ENCODE measurements at regions of chr2 and their contacts with region 1.

Region 1: GRCh38 chr2:241508240-241509154 is at the start of gene STK25:
- DNase-seq: peak; percentile 97 to 98
- ATAC-seq: peak; percentile 51 to 59
- H3K4me3 ChIP-seq: peak within 1 kb of the TSS; percentile 72 to 85 (median 78)
- H3K27ac ChIP-seq: peak within 1 kb of the TSS; percentile 93 to 98 (median 96)
- H3K4me1 ChIP-seq: peaks cover 45 to 53% of the 10 kb centered on the region in 2 donors
- H3K27me3 ChIP-seq: no peaks in the 10 kb centered on the region
- CTCF ChIP-seq: no peak
- POLR2A ChIP-seq: peak; percentile 82 to 84
- total RNA-seq, gene STK25: 407 to 555 (median 524) TPM

Region 2: DNA sequence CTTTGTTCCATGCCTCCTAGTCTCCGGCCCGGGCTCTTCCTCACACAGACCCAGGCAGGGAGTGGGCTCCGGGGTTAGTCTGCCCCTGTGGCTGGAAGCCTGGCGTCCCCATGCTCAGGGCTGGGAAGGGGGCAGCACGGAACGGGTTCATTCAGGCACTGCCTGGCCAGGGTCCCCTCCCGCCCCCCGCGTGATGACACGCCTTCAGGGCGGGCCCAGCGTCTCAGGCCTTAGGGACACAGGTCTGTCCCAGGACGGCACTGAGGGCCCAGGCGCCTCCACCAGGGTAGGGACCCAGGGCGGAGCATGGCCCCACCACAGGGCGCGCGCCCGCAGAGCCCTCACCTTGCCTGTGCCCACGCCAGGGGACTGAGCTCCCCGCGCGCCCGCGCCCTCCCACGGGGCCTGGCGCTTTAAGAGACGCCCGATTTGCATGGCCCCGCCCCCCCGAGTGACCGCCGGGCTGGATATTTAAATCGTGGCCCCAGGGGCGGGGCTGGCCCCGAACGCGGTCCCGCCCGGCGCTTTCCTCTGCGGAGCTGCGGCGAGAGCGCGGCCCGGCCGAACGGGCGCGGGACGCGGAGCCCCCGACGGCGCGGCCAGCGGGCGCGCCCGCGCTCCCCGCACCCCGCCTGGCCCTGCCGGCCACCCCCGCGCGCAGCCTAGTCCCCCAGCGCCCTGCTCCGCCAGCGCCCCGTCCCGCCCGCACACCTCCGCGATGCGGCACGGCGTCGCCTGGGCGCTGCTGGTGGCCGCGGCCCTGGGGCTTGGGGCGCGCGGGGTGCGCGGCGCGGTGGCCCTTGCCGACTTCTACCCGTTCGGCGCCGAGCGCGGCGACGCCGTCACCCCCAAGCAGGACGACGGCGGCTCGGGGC is 510.1 kb before region 1 on chr2 and contains the start of gene SNED1:
- in situ Hi-C with region 1: no loop called
- intact Hi-C with region 1: loop called (anchors 5 kb)
- DNase-seq: peak; percentile 87 to 89
- ATAC-seq: peak; percentile 61 to 79
- H3K4me3 ChIP-seq: peak within 1 kb of the TSS; percentile 63 to 98 (median 73)
- H3K27ac ChIP-seq: peak within 1 kb of the TSS; percentile 95 to 99 (median 96)
- H3K4me1 ChIP-seq: peaks cover 41 to 51% of the 10 kb centered on the region in 2 donors
- H3K27me3 ChIP-seq: no peaks in the 10 kb centered on the region
- CTCF ChIP-seq: no peak
- POLR2A ChIP-seq: peak; percentile 92 to 98
- total RNA-seq, gene SNED1: 16.4 to 56.2 (median 43.5) TPM

Region 3: GRCh38 chr2:241217320-241218031 is 291.0 kb before region 1 on chr2:
- in situ Hi-C with region 1: no loop called
- intact Hi-C with region 1: loop called (anchors 5 kb)
- DNase-seq: peak; percentile 29 to 74
- ATAC-seq: peak; percentile 69 to 81
- H3K4me3 ChIP-seq: peak overlapping the region; percentile 57 to 69 (median 63)
- H3K27ac ChIP-seq: peak overlapping the region; percentile 73 to 94 (median 79)
- H3K4me1 ChIP-seq: peaks cover 4 to 16% of the 10 kb centered on the region in 2 donors
- H3K27me3 ChIP-seq: no peaks in the 10 kb centered on the region
- CTCF ChIP-seq: peak in 1 of 5 experiments; percentile 13
- POLR2A ChIP-seq: no peak

Region 4: GRCh38 chr2:241315093-241315878 is 193.2 kb before region 1 on chr2 and contains the start of gene HDLBP:
- in situ Hi-C with region 1: no loop called
- intact Hi-C with region 1: loop called (anchors 1 kb)
- DNase-seq: peak; percentile 98 to 99
- ATAC-seq: peak; percentile 80 to 87
- H3K4me3 ChIP-seq: peak within 1 kb of the TSS; percentile 67 to 92 (median 83)
- H3K27ac ChIP-seq: peak within 1 kb of the TSS; percentile 97 to 99 (median 98)
- H3K4me1 ChIP-seq: peaks cover 66 to 73% of the 10 kb centered on the region in 2 donors
- H3K27me3 ChIP-seq: no peaks in the 10 kb centered on the region
- CTCF ChIP-seq: peak in 2 of 5 experiments; percentile 15 to 16
- POLR2A ChIP-seq: peak; percentile 90 to 93
- total RNA-seq, gene HDLBP: 383 to 486 (median 444) TPM

Region 5: DNA sequence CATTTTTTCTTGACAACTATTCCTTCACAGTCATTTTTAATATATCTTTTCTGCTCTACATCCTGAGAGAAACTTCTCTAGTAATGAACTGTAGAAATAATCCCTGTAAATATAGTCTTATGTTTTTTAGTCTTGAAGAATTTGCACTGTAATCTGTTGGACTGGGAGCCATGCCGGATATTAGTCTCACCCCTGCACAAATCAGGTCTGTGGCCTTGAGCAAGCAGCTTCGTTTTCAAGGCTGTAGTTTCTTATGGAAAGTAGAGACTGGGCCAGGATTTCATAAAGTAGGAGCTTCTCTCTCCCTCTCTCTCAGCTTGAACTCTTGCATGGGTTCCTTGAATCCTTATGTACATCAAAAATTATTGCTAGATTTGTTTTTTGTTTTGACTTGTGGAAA is 143.7 kb before region 1 on chr2:
- in situ Hi-C with region 1: no loop called
- intact Hi-C with region 1: loop called (anchors 2 kb)
- DNase-seq: no peak
- ATAC-seq: no peak
- H3K4me3 ChIP-seq: no peak overlapping the region
- H3K27ac ChIP-seq: peak overlapping the region in 2 of 4 donors; percentile 73 to 84
- H3K4me1 ChIP-seq: peaks cover 42 to 49% of the 10 kb centered on the region in 2 donors
- H3K27me3 ChIP-seq: no peaks in the 10 kb centered on the region
- CTCF ChIP-seq: no peak
- POLR2A ChIP-seq: no peak

Region 6: DNA sequence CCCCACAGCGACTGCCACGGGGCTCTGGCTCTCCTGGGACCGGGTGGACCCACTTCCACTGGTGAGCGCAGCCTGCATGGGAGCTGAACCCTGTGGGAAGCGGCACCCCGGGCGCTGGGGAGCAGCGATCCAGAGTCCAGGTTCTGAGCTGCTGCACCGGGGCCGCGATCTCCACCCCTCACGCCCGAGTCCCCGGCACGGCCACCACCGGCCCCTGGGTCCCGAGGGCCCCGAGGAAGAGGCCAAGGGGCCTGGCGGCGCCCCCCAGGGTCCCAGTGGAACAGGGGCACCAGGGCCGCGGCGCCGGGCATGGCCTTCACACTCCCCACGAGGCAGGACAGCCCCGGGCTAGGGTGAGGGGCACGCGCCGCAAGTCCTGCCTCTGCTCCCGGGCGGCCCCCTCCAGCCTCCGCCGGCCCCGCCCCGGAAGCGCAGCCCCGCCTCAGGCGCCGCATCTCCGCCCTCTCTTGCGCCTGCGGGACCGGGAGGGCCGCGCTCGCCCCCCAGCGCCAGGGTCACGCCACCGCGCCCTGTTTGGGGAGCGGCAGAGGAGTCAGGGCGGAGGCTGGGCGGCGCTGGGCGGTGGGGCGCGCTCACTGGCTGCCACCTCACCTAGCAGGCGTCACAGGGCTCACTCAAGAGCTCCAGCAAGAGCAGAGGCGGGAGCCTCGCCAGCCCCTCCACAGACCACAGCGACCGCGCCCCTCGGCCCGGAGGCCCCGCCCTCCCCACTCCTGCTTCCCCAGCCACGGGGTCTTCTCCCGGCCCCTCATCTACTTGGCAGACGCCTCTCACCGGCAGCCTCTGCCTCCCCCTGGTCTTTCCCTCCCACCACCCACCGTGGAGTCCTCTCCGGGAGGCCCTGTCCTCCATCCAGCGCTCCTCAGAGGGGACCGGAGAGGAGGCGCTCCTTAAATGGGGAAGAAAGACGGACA is 101.6 kb after region 1 on chr2:
- in situ Hi-C with region 1: no loop called
- intact Hi-C with region 1: loop called (anchors 5 kb)
- DNase-seq: peak; percentile 55 to 78
- ATAC-seq: peak; percentile 86
- H3K4me3 ChIP-seq: peak overlapping the region; percentile 67 to 80 (median 70)
- H3K27ac ChIP-seq: peak overlapping the region; percentile 72 to 85 (median 78)
- H3K4me1 ChIP-seq: peaks cover 7 to 14% of the 10 kb centered on the region in 2 donors
- H3K27me3 ChIP-seq: no peaks in the 10 kb centered on the region
- CTCF ChIP-seq: peak; percentile 48 to 87 (median 56)
- POLR2A ChIP-seq: peak; percentile 23 to 47

Region 7: GRCh38 chr2:241702132-241703031 is 193.9 kb after region 1 on chr2:
- in situ Hi-C with region 1: no loop called
- intact Hi-C with region 1: loop called (anchors 2 kb)
- DNase-seq: peak; percentile 78 to 81
- ATAC-seq: peak; percentile 83 to 85
- H3K4me3 ChIP-seq: peak overlapping the region; percentile 57 to 97 (median 82)
- H3K27ac ChIP-seq: peak overlapping the region; percentile 89 to 97 (median 94)
- H3K4me1 ChIP-seq: peaks cover 6 to 16% of the 10 kb centered on the region in 2 donors
- H3K27me3 ChIP-seq: no peaks in the 10 kb centered on the region
- CTCF ChIP-seq: peak in 4 of 5 experiments; percentile 28 to 36 (median 34)
- POLR2A ChIP-seq: no peak

Measured in gastrocnemius medialis (tissue), 4 donors.